Esophagus squamous epithelium (tissue), 5 donors: ENCODE measurements at regions of chr14 and their contacts with region 1.

Region 1: DNA sequence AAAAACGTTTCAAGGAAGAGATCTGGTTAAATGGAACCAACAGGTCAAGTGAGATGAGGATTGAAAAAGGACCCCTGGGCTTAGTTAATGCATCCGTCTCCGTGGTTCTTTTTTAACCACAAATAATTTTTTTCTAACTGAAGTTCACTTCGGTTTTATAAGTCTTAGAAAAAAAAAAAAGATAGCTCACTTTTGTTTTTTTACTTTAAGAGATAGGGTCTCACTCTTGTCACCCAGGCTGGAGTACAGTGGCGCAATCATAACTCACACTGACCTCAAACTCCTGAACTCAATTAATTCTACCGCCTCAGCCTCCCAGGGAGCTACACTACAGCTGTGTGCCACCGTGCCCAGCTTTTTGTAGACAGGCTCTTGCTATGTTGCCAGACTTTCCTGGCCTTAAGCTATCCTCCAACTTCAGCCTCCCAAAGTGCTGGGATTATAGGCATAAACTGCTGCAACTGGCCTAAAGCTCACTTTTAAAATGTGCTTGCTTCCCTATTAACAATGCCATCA is 11.8 kb downstream of the HNRNPC start:
- DNase-seq: no peak
- H3K4me3 ChIP-seq: peak overlapping the region in 1 of 4 donors; percentile 13
- H3K27ac ChIP-seq: no peak overlapping the region
- H3K4me1 ChIP-seq: peaks cover 11 to 90% (median 43%) of the 10 kb centered on the region in 3 donors
- H3K27me3 ChIP-seq: no peaks in the 10 kb centered on the region
- CTCF ChIP-seq: no peak
- POLR2A ChIP-seq: no peak

Region 2: DNA sequence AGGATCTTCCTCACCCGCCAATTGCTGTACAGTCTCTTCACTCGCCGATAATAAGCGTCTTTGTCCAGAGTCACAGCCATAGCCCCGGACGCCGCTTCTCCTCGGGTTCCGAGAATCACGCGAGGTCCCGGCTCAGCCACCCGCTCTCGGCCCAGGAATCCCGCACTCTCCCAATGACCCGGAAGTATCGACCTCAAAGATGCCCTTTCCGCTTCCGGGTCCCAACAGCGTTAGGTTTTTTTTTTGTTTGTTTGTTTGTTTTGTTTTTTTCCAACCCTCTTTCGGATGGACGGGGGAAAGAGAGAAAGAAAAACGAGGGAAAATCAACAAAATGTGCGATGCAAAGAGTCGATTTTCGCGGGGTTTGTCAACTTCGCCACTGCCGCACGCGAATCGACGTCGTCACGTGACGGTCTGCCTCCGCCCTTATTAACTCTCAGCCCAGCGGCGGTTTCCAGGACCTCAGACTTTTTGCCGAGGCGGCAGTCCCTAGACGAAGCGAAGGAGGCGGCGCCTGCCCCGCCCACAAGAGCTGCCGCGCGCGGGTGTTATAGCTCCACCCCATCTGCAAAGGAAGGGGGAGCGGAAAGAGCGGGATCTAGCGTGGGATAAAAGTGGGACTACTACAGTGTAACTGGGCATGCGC is 126.5 kb after region 1 on chr14 and contains the start of gene SUPT16H:
- intact Hi-C with region 1: loop called (anchors 10 kb)
- DNase-seq: peak; percentile 87
- H3K4me3 ChIP-seq: peak within 1 kb of the TSS; percentile 56 to 93 (median 82)
- H3K27ac ChIP-seq: peak within 1 kb of the TSS; percentile 80 to 93 (median 90)
- H3K4me1 ChIP-seq: peaks cover 5 to 36% (median 16%) of the 10 kb centered on the region in 3 donors
- H3K27me3 ChIP-seq: no peaks in the 10 kb centered on the region
- CTCF ChIP-seq: peak in 1 of 6 experiments; percentile 23
- POLR2A ChIP-seq: peak in 2 of 4 donors; percentile 53 to 66
- total RNA-seq, gene SUPT16H: 24.8 to 67.7 (median 47.8) TPM